ENCODE measurements at regions of chr19 and their contacts with region 1.

Region 1: DNA sequence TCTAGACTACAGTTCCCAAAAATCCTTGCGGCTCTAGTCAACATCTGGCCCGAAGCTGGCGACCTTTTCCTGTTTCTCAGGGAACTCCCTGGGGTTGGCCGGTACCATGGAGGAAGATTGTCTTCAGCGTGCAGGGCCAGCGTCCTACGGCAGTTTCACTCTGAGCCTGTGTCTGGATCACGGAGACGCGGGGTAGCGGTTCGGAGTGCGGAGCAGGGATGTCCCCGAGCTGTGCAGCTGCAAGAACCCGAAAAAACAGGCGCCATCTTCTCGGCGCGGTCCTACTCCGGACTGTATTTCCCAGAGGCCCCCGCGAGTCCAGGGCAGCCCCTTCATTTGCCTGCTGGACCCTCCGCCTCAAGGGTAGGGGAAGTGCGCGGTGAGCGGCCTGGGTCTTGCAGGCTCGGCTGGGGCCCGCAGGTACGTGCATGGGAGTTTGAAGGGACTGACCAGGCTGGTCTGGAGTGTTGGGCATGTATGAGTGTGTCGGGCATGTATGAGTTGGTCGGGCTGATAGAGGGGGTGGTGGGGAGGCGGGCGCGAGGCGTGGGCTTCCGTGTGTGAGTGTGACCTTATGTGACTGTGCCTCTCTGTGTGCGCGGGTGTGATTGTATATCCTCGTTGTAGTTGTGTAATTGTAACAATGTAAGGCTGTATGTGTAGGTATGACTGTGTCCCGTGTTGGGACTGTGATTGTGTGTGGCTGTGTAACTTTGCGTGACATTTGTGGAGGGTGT is at the start of gene ZNF383:
- DNase-seq: peak; percentile 95
- H3K4me3 Mint-ChIP-seq: peak within 1 kb of the TSS; percentile 97
- H3K27ac Mint-ChIP-seq: peak within 1 kb of the TSS; percentile 94
- H3K4me1 Mint-ChIP-seq: peaks cover 16% of the 10 kb centered on the region
- H3K27me3 Mint-ChIP-seq: no peaks in the 10 kb centered on the region
- total RNA-seq, gene ZNF383: 6.4 and 8.6 TPM in 2 replicates

Region 2: GRCh38 chr19:36528194-36528920 is 689.7 kb before region 1 on chr19 and contains the start of gene ZNF260:
- intact Hi-C with region 1: loop called (anchors 5 kb)
- DNase-seq: peak; percentile 97
- H3K4me3 Mint-ChIP-seq: peak within 1 kb of the TSS; percentile 96
- H3K27ac Mint-ChIP-seq: peak within 1 kb of the TSS; percentile 95
- H3K4me1 Mint-ChIP-seq: peaks cover 17% of the 10 kb centered on the region
- H3K27me3 Mint-ChIP-seq: no peaks in the 10 kb centered on the region
- total RNA-seq, gene ZNF260: 6.7 and 8.0 TPM in 2 replicates

Region 3: GRCh38 chr19:36772311-36773222 is 445.5 kb before region 1 on chr19 and contains the start of gene ZNF850:
- intact Hi-C with region 1: loop called (anchors 5 kb)
- DNase-seq: peak; percentile 98
- H3K4me3 Mint-ChIP-seq: peak within 1 kb of the TSS; percentile 95
- H3K27ac Mint-ChIP-seq: peak within 1 kb of the TSS; percentile 89
- H3K4me1 Mint-ChIP-seq: peaks cover 21% of the 10 kb centered on the region
- H3K27me3 Mint-ChIP-seq: no peaks in the 10 kb centered on the region
- total RNA-seq, gene ZNF850: 3.2 and 3.8 TPM in 2 replicates

Region 4: DNA sequence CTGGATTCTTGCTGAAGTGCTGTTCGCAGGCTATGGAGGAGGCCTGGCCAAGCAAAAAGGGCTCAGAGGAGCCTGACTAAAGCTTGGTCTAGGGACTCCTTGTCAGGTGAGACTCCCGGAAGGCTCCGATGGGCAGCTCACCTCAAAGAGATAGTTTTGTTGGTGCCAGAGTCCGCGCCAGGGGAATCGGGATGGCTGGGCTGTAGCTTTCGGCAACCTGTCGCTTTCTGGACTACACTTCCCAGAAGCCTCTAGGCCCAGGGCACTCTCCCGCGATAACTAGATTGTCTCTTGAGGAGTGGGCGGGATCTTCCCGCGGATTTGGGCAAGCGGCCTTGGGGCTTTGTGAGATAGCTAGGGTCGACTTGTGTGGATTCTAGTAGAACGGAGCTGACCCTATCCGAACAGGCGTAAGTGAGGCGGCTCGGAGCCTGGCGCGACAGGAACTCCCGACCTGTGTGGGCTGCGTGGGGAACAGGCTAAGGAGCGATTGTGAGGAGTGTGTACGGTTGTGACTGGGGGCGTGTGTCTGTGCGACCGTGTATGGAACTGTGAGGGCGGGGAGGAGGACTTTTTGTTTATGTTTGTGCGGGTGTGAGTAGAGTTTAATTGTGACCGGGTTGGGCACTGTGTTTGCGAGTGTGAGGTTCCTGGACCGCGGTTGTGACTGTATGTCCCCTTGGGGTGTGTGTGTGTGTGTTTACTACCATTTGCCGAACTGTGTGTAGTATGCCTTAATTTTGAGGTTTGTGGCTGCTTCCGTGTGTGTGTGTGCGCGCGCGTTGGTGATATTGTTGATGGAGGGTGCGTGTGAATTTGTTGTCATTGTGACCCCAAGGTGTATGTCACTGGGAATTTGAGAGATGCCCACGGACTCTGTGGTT is 367.2 kb before region 1 on chr19 and contains the start of gene ZNF345:
- intact Hi-C with region 1: loop called (anchors 5 kb)
- DNase-seq: peak; percentile 96
- H3K4me3 Mint-ChIP-seq: no peak within 1 kb of the TSS
- H3K27ac Mint-ChIP-seq: no peak within 1 kb of the TSS
- H3K4me1 Mint-ChIP-seq: peaks cover 2% of the 10 kb centered on the region
- H3K27me3 Mint-ChIP-seq: no peaks in the 10 kb centered on the region
- total RNA-seq, gene ZNF345: 2.8 and 4.2 TPM in 2 replicates

Region 5: DNA sequence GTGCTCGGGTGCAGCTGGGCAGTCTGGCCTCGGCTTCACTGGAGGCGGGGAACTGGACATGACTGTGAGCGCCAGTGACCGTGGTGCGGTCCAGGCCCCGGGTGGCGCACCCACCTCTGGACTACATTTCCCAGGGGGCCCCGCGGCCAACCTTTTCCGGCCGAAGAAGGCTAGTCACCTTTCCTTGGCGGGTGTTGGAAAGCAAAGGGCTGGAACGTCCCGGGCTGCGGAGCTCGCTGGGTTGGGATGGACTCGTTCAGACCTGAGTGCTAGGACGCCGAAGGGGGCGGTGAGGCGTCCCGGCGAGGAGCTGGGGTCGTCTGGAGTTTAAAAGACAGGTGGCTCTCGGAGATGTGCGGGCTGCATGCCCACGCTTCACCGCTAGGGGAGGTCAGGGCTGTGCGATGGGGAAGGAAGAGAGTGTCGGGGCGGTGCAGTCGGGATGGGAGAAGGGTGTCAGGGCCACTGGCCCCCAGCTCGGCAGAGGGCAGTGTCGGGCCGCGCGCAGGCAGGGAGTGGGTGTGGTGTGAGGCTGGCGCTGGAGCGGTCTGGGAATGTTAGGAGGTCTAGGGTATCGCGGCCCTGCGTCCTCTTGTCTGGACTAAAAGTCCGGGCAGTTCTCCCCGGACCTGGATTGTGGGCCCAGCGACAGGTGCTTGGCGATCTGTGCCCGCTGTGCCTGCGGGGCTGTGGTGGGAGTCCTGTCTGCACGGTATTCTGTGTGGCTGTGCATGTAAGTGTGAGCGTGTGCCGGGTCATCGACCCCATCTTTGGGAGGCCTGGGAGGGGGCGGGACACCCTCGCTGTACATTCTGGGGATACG is 244.8 kb before region 1 on chr19:
- intact Hi-C with region 1: loop called (anchors 10 kb)
- DNase-seq: peak; percentile 92
- H3K4me3 Mint-ChIP-seq: peak overlapping the region; percentile 99
- H3K27ac Mint-ChIP-seq: peak overlapping the region; percentile 92
- H3K4me1 Mint-ChIP-seq: peaks cover 12% of the 10 kb centered on the region
- H3K27me3 Mint-ChIP-seq: no peaks in the 10 kb centered on the region

Region 6: GRCh38 chr19:37370880-37371661 is 153.0 kb after region 1 on chr19 and contains the start of gene ZNF527:
- intact Hi-C with region 1: loop called (anchors 2 kb)
- DNase-seq: peak; percentile 99
- H3K4me3 Mint-ChIP-seq: peak within 1 kb of the TSS; percentile 94
- H3K27ac Mint-ChIP-seq: peak within 1 kb of the TSS; percentile 91
- H3K4me1 Mint-ChIP-seq: peaks cover 9% of the 10 kb centered on the region
- H3K27me3 Mint-ChIP-seq: no peaks in the 10 kb centered on the region
- total RNA-seq, gene ZNF527: 3.5 and 4.9 TPM in 2 replicates

Region 7: GRCh38 chr19:37779127-37780005 is 561.3 kb after region 1 on chr19 and contains the start of gene ZNF573:
- intact Hi-C with region 1: loop called (anchors 10 kb)
- DNase-seq: peak; percentile 93
- H3K4me3 Mint-ChIP-seq: peak within 1 kb of the TSS; percentile 96
- H3K27ac Mint-ChIP-seq: peak within 1 kb of the TSS; percentile 92
- H3K4me1 Mint-ChIP-seq: peaks cover 11% of the 10 kb centered on the region
- H3K27me3 Mint-ChIP-seq: no peaks in the 10 kb centered on the region
- total RNA-seq, gene ZNF573: 6.5 and 6.8 TPM in 2 replicates

Region 8: DNA sequence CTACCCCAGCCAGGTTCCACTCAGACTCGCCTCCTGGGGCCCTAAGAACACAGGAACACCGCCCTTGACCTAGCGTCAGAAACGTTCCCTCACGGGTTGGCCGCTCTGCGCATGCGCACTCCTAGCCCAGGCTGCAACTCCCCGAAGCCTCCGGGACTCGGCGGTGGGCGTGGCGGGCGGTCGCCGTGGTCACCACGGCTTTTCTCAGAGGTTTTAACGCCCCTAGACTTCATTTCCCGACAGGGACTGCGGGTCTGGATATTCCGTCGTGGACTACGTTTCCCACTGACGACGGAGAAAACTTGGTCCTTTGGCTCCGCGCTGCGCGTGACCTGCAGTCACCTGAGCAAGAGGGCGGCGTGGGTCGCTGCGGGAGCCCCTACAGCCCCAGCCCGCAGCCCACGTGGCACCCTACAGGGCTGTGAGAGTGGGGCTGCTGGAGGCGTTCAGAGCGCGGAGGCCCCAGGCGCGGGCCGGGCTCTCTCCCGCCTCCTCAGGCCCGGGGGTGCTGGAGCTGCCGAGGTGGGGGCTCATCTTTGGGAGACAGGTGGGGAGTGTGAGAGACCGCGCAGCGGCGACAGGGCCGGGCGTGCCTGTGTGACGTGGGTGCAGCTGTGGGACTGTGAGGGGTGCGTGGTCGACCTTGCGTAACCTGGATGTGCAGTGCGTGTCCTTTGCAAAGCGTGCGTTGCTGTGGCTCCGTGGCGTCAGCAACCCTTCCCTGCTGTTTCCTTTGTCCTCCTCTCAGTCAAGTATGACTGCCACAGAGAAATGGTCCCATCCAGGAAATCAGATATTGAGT is 599.4 kb after region 1 on chr19:
- intact Hi-C with region 1: no loop called
- DNase-seq: no peak
- H3K4me3 Mint-ChIP-seq: no peak overlapping the region
- H3K27ac Mint-ChIP-seq: no peak overlapping the region
- H3K4me1 Mint-ChIP-seq: no peaks in the 10 kb centered on the region
- H3K27me3 Mint-ChIP-seq: no peaks in the 10 kb centered on the region